ENCODE measurements at regions of chr14 and their contacts with region 1.

Region 1: DNA sequence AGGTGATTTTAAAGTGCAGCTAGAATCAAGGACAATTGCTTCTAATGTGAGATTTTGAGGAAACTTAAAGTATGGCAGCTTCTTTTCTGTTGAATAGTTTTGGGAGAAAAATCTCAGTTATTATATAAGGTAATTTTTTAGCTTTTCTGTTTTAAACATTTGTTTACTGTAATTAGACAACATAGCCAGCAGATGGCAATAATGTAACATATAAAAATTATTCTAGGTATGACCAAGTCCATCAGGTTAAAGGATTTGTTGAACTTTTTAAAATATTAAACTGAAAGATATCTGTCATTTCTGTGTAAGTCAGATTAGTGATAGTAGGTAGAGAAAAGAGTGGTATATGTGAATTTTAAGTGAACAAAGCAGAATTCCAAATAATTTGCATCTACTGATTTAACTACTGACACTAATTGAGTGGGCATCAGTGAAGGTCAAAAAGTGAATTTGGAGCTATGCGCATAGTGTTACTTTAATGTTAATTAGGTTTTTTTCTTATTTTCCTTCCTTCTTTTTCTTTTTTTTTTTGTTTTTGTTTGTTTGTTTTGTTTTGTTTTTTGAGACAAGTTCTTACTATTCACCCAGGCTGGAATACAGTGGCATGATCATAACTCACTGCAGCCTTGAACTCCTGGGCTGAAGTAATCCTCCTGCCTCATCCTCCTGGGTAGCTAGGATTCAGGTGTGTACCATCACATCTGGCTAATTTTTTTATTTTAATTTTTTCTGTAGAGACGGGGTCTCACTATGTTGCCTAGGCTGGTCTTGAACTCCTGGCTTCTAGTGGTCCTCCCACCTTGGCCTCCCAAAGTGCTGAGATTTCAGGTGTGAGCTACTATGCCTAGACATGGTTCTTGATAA is 18.6 kb downstream of the PRORP start:
- DNase-seq: no peak

Region 2: DNA sequence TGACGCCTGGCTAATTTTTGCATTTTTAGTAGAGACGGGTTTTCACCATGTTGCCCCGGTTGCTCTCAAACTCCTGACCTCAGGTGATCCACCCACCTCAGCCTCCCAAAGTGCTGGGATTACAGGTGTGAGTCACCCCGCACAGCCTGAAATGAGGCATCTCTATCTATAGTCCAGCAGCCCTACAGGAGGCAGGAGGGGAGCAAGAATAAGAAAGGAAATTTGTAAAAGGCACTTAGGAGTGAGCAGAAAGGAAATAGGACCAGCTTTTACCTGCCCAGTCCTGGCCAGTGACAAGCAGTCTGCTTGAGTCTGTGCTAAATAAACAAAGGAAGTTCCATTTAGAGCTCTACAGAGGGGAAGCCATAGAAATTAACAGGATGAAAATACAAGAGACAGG is 136.2 kb after region 1 on chr14:
- intact Hi-C with region 1: no loop called
- DNase-seq: no peak

Region 3: DNA sequence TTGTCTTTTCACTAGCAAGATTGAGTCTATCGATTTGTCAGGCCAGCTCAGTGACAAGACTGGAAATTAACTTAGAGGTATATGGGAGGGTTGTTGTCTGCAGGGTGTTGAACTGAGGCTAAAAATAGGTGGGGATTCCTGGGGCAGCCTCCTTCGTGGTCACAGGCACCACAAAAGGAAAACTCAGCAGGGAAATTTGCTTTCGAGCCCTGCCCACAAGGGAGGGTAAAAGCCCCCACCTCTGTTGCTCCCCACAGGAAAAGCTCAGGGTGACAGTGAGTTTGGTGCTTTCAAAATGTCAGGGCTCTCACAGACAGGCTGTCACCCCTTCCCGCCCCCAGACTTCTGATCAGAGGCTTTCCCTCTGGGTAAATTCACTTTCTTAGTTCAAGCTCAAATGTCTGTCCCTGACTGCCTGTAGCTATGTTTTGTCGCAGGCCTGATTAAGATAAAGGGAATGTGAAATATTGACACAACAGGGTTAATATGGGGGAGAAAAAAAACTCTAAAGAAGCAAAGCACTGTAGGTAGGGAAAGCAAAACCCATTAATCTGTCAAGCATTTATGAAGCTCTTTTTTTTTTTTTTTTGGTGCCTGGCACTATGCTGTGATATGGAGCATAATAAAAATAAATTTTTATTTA is 275.3 kb after region 1 on chr14:
- intact Hi-C with region 1: loop called (anchors 2 kb)
- DNase-seq: no peak